Mucosa of descending colon (tissue), 3 donors: ENCODE measurements at regions of chr3 and their contacts with region 1.

Region 1: DNA sequence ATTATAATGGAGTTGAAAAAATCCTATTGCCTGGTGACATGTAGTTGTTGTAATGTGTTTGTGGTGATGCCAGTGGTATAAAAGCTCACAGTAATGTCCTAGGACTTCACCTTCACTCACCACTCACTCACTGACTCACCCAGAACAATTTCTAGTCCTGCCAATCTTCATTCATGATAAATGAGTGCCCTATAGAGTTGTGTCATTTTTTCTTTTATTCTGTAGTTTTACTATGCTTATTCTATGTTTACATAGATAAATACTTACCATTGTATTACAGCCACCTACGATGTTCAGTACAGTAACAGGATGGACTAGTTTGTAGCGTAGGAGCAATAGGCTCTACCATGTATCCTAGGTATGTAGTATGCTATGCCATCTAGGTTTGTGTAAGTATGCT is 88.5 kb upstream of the LRRFIP2 start:
- DNase-seq: no peak
- ATAC-seq: peak; percentile 75
- H3K4me3 ChIP-seq: no peak overlapping the region
- H3K4me1 ChIP-seq: no peaks in the 10 kb centered on the region
- CTCF ChIP-seq: no peak

Region 2: DNA sequence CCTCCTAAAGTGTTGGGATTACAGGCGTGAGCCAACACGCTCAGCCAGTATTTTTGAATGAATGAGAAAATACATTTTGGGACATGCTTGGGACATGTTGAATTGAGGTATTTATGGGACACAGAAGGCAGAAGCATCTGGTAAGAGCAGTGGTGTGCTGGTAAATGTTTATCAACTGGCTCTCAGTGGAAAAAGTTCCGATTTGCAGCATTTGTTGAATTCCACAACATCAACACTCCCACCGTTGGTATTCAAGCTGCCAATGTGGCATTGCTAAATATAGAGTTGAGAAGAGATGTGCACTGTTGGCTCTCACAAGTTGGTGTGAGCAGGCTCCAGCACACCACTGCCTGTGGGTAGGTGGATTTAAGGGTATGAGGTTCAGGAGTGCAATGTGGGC is 52.7 kb before region 1 on chr3:
- intact Hi-C with region 1: no loop called
- DNase-seq: no peak
- ATAC-seq: no peak
- H3K4me3 ChIP-seq: no peak overlapping the region
- H3K4me1 ChIP-seq: peaks cover 3% of the 10 kb centered on the region
- CTCF ChIP-seq: no peak

Region 3: GRCh38 chr3:37310666-37311050 is 47.8 kb after region 1 on chr3:
- intact Hi-C with region 1: loop called in 1 of 2 experiments (anchors 10 kb)
- DNase-seq: no peak
- ATAC-seq: no peak
- H3K4me3 ChIP-seq: no peak overlapping the region
- H3K4me1 ChIP-seq: no peaks in the 10 kb centered on the region
- CTCF ChIP-seq: no peak